ENCODE measurements at regions of chr16 and their contacts with region 1.

Region 1: GRCh38 chr16:89507834-89508590 is at the start of gene SPG7:
- DNase-seq: peak; percentile 95
- ATAC-seq: peak; percentile 75
- H3K4me3 ChIP-seq: peak within 1 kb of the TSS; percentile 61 to 92 (median 73)
- H3K4me3 Mint-ChIP-seq: peak within 1 kb of the TSS; percentile 94
- H3K27ac ChIP-seq: peak within 1 kb of the TSS; percentile 71 to 87
- H3K27ac Mint-ChIP-seq: peak within 1 kb of the TSS; percentile 88
- H3K4me1 ChIP-seq: peaks cover 34 to 38% of the 10 kb centered on the region in 2 donors
- H3K4me1 Mint-ChIP-seq: peaks cover 31% of the 10 kb centered on the region
- H3K27me3 ChIP-seq: no peaks in the 10 kb centered on the region
- H3K27me3 Mint-ChIP-seq: no peaks in the 10 kb centered on the region
- CTCF ChIP-seq: no peak
- total RNA-seq, gene SPG7: 146 and 153 TPM in 2 replicates

Region 2: GRCh38 chr16:89319883-89320781 is 187.9 kb before region 1 on chr16:
- CTCF ChIA-PET with region 1: interaction called, 3 read pairs
- POLR2A ChIA-PET with region 1: no interaction called
- intact Hi-C with region 1: loop called (anchors 5 kb)
- DNase-seq: no peak
- ATAC-seq: no peak
- H3K4me3 ChIP-seq: no peak overlapping the region
- H3K4me3 Mint-ChIP-seq: peak overlapping the region; percentile 66
- H3K27ac ChIP-seq: no peak overlapping the region
- H3K27ac Mint-ChIP-seq: peak overlapping the region; percentile 50
- H3K4me1 ChIP-seq: peaks cover 45 to 83% of the 10 kb centered on the region in 2 donors
- H3K4me1 Mint-ChIP-seq: peaks cover 90% of the 10 kb centered on the region
- H3K27me3 ChIP-seq: no peaks in the 10 kb centered on the region
- H3K27me3 Mint-ChIP-seq: no peaks in the 10 kb centered on the region
- CTCF ChIP-seq: no peak

Region 3: DNA sequence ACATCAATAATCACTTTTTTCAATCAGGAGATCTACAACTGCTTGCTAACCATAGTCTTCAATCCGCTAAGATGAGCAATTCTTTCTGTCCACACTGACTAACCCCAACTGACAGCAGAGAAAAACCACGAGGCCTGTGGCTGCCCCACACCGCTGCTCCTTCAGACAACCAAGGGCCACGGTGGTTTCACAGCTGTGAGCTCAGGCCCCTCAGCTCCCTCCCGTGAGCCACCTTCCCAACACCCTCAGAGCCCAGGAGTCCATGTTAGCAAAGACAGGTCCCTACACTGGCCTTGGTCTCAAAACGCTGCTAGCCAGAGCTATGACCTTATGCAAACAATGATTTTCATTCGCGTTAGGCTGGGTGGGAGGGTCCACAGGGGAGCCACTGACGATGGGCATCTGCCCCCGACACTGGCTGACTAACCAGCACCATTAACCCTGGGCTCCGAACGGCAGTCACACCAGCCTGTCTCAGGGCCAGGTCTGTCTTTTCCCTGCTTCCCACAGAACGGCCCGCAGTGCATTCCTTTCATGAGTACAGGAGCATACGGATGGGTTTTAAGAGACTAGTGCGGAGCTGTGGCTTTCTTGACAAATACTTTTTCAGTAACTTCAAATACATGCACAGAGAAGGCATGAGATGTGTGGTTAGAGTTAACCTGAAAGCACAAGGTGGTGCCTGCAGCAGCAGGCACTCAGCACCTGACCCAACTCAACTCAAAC is 84.9 kb before region 1 on chr16:
- CTCF ChIA-PET with region 1: no interaction called
- POLR2A ChIA-PET with region 1: interaction called, 4 read pairs
- intact Hi-C with region 1: loop called (anchors 5 kb)
- DNase-seq: peak; percentile 48
- ATAC-seq: peak; percentile 70
- H3K4me3 ChIP-seq: peak overlapping the region in 2 of 5 experiments; percentile 17 to 42
- H3K4me3 Mint-ChIP-seq: peak overlapping the region; percentile 75
- H3K27ac ChIP-seq: peak overlapping the region in 1 of 2 donors; percentile 65
- H3K27ac Mint-ChIP-seq: peak overlapping the region; percentile 27
- H3K4me1 ChIP-seq: peaks cover 55 to 64% of the 10 kb centered on the region in 2 donors
- H3K4me1 Mint-ChIP-seq: peaks cover 73% of the 10 kb centered on the region
- H3K27me3 ChIP-seq: no peaks in the 10 kb centered on the region
- H3K27me3 Mint-ChIP-seq: no peaks in the 10 kb centered on the region
- CTCF ChIP-seq: no peak

Region 4: GRCh38 chr16:89490387-89491237 is 17.4 kb before region 1 on chr16 and contains the start of gene ANKRD11:
- CTCF ChIA-PET with region 1: interaction called, 8 read pairs
- POLR2A ChIA-PET with region 1: interaction called, 16 read pairs
- intact Hi-C with region 1: loop called (anchors 1 kb)
- DNase-seq: peak; percentile 99
- ATAC-seq: peak; percentile 81
- H3K4me3 ChIP-seq: peak within 1 kb of the TSS; percentile 59 to 93 (median 86)
- H3K4me3 Mint-ChIP-seq: peak within 1 kb of the TSS; percentile 93
- H3K27ac ChIP-seq: peak within 1 kb of the TSS; percentile 91 to 97
- H3K27ac Mint-ChIP-seq: peak within 1 kb of the TSS; percentile 97
- H3K4me1 ChIP-seq: peaks cover 41 to 46% of the 10 kb centered on the region in 2 donors
- H3K4me1 Mint-ChIP-seq: peaks cover 56% of the 10 kb centered on the region
- H3K27me3 ChIP-seq: no peaks in the 10 kb centered on the region
- H3K27me3 Mint-ChIP-seq: no peaks in the 10 kb centered on the region
- CTCF ChIP-seq: no peak
- total RNA-seq, gene ANKRD11: 314 and 320 TPM in 2 replicates

Region 5: DNA sequence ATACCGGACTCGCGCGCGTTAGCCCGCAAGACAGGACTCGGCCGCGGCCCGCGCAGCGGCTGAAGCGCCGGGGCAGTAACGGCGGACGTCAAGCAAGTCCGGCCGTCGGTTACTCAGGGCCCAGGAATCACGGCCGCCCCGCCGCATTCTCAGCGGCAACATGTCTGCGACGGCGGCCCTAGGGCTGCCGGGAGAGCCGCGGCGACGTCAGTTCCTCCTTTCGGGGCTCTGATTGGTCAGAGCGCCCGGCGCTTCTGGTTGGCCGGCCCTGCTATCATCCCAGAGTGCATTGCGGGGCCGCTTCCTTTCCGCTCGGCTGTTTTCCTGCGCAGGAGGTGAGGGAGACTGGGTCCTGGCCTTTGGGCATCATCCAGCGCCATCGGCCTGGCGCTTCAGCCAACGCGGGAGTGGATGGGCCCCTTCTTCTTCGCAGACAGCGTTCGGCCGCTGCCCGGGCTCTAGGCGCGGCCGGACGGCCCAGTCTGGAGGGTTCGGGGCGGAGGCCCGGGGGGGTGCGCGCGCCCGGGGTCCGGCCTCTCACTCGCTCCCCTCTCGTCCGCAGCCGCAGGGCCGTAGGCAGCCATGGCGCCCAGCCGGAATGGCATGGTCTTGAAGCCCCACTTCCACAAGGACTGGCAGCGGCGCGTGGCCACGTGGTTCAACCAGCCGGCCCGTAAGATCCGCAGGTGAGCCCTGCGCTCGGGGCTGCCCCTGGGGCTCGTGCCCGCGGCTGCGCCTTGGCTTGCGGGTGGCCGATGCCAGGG is 52.5 kb after region 1 on chr16 and contains the start of gene RPL13:
- CTCF ChIA-PET with region 1: interaction called, 6 read pairs
- POLR2A ChIA-PET with region 1: no interaction called
- intact Hi-C with region 1: loop called (anchors 1 kb)
- DNase-seq: peak; percentile 95
- ATAC-seq: peak; percentile 94
- H3K4me3 ChIP-seq: peak within 1 kb of the TSS; percentile 54 to 99 (median 92)
- H3K4me3 Mint-ChIP-seq: peak within 1 kb of the TSS; percentile 92
- H3K27ac ChIP-seq: peak within 1 kb of the TSS; percentile 82 to 91
- H3K27ac Mint-ChIP-seq: peak within 1 kb of the TSS; percentile 95
- H3K4me1 ChIP-seq: peaks cover 36 to 41% of the 10 kb centered on the region in 2 donors
- H3K4me1 Mint-ChIP-seq: peaks cover 43% of the 10 kb centered on the region
- H3K27me3 ChIP-seq: no peaks in the 10 kb centered on the region
- H3K27me3 Mint-ChIP-seq: no peaks in the 10 kb centered on the region
- CTCF ChIP-seq: no peak
- total RNA-seq, gene RPL13: 3,172 and 3,184 TPM in 2 replicates

Measured in B cell (primary cell).